Dendritic cell treated with granulocyte-macrophage colony-stimulating factor and Interleukin-4, amounts not matched to agents 40 ng/mL and 50 ng/mL, for 4 days (primary cell): ENCODE measurements at regions of chr12 and their contacts with region 1.

Region 1: GRCh38 chr12:67367843-67368242 is 98.7 kb downstream of the CAND1 start:
- H3K4me3 Mint-ChIP-seq: no peak overlapping the region
- H3K27ac Mint-ChIP-seq: no peak overlapping the region
- H3K4me1 Mint-ChIP-seq: no peaks in the 10 kb centered on the region
- H3K27me3 Mint-ChIP-seq: peaks cover 2% of the 10 kb centered on the region

Region 2: DNA sequence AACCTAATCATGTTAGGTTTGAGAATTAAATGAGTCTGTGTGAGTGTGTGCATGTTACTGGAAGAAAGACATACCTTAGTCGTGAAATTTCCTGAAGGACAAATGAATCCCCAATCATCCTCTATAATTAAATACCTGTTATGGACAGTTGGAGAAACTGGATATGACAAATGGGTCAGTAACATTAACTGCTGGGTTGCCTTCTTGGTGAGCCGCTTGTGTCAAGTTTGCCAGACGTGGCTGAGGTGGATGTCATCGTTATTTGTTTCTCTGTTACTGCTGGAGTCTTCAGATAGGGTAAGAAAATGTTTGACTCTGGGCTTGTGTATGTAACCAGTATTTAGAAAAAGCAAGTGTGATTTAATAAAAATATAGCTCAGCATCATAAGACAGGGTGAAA is 32.9 kb after region 1 on chr12:
- intact Hi-C with region 1: no loop called
- H3K4me3 Mint-ChIP-seq: no peak overlapping the region
- H3K27ac Mint-ChIP-seq: no peak overlapping the region
- H3K4me1 Mint-ChIP-seq: no peaks in the 10 kb centered on the region
- H3K27me3 Mint-ChIP-seq: no peaks in the 10 kb centered on the region

Region 3: DNA sequence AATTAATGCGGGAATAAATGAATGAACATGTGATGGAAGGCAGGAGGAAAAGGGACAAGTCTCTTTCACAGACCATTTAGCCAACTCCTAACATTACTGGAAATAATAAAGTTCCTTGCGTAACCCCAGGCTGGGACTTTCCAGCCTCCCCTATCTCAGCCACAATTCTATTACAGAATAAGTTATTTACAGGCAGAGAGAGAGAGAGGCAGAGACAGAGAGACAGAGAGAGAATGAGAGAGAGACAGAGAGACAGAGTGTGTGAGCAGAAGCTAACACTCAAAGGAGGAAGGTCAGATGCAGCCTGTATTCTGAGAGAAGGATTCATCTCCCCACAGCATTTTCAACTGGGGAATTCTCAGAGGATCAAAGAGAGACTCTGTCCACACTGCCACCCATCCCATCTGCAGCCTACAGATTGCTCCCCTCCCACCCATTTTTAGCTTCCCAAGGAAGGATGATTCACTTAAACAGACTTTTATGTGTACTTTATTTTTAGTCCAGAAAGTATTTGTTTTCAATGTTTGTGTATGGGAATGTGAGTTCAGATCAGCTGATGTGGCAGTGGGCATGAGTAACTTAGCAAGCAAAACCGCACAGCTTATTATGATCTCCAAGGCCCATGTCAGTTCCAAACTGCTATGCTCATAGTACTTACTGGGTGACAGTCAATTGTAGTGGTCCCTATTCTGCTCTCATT is 67.0 kb after region 1 on chr12:
- intact Hi-C with region 1: loop called (anchors 5 kb)
- H3K4me3 Mint-ChIP-seq: no peak overlapping the region
- H3K27ac Mint-ChIP-seq: no peak overlapping the region
- H3K4me1 Mint-ChIP-seq: peaks cover 10% of the 10 kb centered on the region
- H3K27me3 Mint-ChIP-seq: peaks cover 24% of the 10 kb centered on the region